ENCODE measurements at regions of chr12 and their contacts with region 1.

Region 1: GRCh38 chr12:20646239-20646827 is 48.8 kb upstream of the SLCO1C1 start:
- DNase-seq: no peak
- H3K4me3 ChIP-seq: no peak overlapping the region
- H3K27ac ChIP-seq: peak overlapping the region; percentile 2 to 59
- H3K4me1 ChIP-seq: no peaks in the 10 kb centered on the region
- H3K27me3 ChIP-seq: no peaks in the 10 kb centered on the region
- CTCF ChIP-seq: peak; percentile 34 to 65 (median 55)

Region 2: GRCh38 chr12:20798561-20798960 is 152.2 kb after region 1 on chr12:
- intact Hi-C with region 1: loop called (anchors 2 kb)
- DNase-seq: no peak
- H3K4me3 ChIP-seq: no peak overlapping the region
- H3K27ac ChIP-seq: no peak overlapping the region
- H3K4me1 ChIP-seq: peaks cover 0 to 4% of the 10 kb centered on the region in 2 donors
- H3K27me3 ChIP-seq: no peaks in the 10 kb centered on the region
- CTCF ChIP-seq: peak in 2 of 3 experiments; percentile 10 to 48

Region 3: GRCh38 chr12:21065845-21066244 is 419.5 kb after region 1 on chr12:
- intact Hi-C with region 1: loop called (anchors 2 kb)
- DNase-seq: no peak
- H3K4me3 ChIP-seq: no peak overlapping the region
- H3K27ac ChIP-seq: no peak overlapping the region
- H3K4me1 ChIP-seq: no peaks in the 10 kb centered on the region
- H3K27me3 ChIP-seq: no peaks in the 10 kb centered on the region
- CTCF ChIP-seq: peak; percentile 24 to 62 (median 50)

Region 4: GRCh38 chr12:21169878-21170472 is 523.6 kb after region 1 on chr12:
- intact Hi-C with region 1: loop called (anchors 10 kb)
- DNase-seq: no peak
- H3K4me3 ChIP-seq: no peak overlapping the region
- H3K27ac ChIP-seq: no peak overlapping the region
- H3K4me1 ChIP-seq: no peaks in the 10 kb centered on the region
- H3K27me3 ChIP-seq: no peaks in the 10 kb centered on the region
- CTCF ChIP-seq: peak; percentile 15 to 64 (median 35)

Measured in ascending aorta (tissue), 2 donors.